Right ventricle myocardium inferior (tissue), 1 donor: ENCODE measurements at regions of chr20 and their contacts with region 1.

Region 1: DNA sequence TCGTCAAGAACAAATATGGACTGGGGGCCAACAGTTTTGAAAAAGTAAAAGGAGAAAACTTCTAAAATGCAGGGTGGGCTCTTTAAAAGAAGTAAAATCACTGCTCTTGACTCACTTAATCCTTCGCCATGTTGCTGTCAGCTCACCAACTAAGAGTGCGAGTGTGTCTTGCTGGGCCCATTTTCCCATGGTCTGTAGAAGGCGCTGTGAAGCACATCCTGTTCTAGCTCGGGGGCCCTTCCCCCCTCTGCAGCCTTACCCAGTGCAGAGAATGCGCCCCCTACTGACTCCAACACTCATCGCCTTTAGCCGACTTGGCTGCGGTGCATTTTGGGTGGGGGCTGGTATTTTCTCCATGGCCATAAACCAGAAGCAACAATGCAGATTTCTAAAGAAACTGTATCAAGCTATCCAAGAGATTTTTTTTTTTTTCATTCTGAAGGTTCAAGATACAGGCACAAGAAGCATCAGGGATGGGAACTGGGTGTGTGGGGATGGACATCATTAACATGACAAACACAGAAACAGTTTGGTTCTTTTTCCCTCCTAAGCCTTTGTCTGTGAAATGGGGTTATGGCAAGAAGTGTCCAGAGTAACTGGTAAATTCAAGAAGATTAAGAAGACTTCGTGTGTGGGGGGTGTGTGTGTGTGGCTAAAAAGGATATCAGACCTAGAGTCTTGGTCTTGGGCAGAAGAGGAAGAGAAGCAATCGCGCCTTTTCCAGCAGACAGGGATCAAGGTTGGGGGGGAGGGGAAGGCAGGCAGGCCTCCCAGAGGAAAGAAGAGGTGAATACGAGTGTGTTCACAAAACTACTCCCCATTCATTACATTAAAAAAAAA is 1.7 kb downstream of the ADNP start:
- DNase-seq: peak; percentile 92
- ATAC-seq: peak; percentile 54

Region 2: DNA sequence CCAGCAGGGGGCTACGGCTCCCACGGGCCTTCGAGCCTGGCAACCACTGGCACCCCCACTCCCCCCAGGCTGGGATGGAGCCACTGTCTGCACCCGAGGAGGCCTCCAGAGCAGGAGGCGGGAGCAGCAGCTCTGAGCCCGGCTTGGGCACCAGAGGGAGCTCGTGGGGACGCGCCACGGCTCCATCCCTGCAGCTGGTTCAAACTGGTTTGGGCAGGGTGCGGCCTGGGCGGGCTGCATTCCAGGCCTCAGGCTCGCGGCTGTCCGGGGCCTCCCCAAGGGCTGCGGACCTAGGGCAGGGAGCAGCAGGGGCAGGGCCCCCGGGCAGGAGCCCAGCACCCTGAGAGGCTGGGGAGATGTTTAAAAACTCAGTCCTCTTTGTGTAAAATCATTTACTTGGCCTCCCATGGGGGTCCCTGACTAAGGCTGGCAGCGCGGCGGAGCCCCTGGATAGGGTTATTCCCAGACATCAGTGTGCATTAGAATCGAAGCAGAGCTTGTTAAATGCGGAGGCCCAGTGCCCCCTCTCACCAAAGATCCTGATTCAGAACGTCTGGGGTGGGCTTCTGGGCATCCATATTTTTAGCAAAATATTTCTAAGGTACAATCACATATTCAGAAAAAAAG is 138.8 kb before region 1 on chr20:
- intact Hi-C with region 1: loop called (anchors 1 kb)
- DNase-seq: peak; percentile 93
- ATAC-seq: peak; percentile 87

Region 3: DNA sequence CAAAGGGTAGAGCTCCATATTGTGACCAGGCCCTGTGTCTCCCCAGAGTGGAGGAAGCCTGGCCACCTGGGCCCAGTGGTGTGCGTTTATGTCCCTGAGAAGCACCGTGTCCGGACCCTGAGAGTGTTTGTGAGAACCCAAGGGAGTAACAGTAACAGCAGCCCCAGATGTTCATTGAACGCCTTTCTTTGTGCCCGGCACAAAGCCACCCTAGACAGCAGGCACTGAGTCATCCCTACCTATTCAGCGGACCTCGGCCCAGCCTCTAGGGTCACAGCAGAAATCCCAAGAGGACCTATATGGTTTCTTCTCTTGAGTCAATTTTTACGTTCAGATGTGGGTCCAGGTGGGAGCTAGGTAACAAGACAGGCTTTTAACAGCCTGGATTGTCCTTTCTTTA is 110.2 kb before region 1 on chr20:
- intact Hi-C with region 1: loop called (anchors 2 kb)
- DNase-seq: no peak
- ATAC-seq: no peak

Region 4: DNA sequence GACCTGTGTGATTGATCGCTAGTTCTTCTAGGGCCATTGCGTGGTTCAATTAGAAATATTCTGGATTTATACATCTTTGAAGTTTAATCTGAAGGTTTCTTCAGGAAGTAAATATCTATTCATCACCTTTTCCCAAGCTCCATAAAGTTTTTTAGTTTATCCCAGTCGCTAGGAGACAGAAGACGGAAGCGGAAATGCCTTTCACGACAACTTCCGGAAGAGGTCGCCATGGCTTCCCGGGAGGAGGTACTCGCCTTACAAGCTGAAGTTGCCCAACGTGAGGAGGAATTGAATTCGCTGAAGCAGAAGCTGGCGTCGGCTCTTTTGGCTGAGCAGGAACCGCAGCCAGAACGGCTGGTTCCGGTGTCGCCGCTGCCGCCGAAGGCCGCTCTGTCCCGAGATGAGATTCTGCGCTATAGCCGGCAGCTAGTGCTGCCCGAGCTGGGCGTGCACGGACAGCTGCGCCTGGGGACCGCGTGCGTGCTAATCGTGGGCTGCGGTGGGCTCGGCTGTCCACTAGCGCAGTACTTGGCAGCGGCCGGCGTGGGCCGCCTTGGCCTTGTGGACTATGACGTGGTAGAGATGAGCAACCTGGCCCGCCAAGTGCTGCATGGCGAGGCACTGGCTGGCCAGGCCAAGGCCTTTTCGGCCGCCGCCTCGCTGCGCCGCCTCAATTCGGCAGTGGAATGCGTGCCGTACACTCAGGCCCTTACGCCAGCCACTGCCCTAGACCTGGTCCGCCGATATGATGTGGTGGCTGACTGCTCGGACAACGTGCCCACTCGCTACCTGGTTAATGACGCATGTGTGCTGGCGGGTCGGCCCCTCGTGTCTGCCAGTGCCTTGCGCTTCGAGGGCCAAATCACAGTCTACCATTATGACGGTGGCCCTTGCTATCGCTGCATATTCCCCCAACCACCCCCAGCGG is 29.4 kb after region 1 on chr20 and contains the start of gene MOCS3:
- intact Hi-C with region 1: loop called (anchors 2 kb)
- DNase-seq: peak; percentile 81
- ATAC-seq: peak; percentile 81
- total RNA-seq, gene MOCS3: 2.3 TPM

Region 5: GRCh38 chr20:51326201-51326819 is 396.8 kb after region 1 on chr20:
- intact Hi-C with region 1: no loop called
- DNase-seq: no peak
- ATAC-seq: no peak

Region 6: GRCh38 chr20:51767010-51767558 is 837.6 kb after region 1 on chr20:
- intact Hi-C with region 1: no loop called
- DNase-seq: peak; percentile 88
- ATAC-seq: peak; percentile 92